Posterior vena cava (tissue), 2 donors: ENCODE measurements at regions of chr16 and their contacts with region 1.

Region 1: GRCh38 chr16:75064403-75065148 is 52.0 kb downstream of the LDHD start:
- DNase-seq: no peak

Region 2: DNA sequence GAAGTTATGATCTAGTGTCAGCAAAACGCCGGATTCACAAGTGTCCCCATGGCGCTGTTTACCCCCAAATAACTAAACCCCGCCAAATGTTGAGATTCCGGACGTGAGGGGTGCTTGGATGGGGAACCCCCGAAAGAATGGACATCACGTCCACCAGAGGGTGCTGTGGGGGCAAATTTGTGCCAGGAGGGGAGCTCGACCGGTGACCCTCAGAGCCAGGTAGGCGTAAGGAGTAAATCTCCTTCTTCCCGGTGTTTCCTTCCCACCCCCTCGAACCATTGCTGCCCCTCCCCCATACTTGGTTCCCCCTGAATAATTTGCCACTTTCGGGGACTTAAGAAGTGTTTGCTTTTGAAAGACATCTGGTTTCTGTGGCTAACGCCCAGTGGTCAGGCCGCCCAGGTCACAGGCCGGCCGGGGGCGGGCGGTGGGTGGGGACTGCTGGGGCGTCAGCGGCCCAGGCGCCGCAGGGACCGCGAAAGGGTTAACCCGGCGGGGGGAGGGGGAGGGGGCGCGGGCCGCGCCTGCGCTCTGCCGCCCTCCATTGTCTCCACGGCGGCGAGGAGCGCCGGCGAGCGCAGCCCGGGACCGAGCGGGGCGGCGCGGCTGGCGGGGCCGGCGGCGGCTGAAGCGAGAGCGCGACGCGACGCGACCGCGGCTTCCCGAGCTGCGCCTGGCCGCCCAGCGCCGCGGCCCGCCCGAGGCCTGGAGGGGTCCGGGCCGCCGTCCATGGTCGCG is 65.9 kb before region 1 on chr16 and contains the start of gene ZNRF1:
- intact Hi-C with region 1: loop called in 1 of 2 experiments (anchors 10 kb)
- DNase-seq: peak; percentile 94
- total RNA-seq, gene ZNRF1: 15.4 to 23.5 TPM

Region 3: GRCh38 chr16:75130150-75130771 is 65.7 kb after region 1 on chr16:
- intact Hi-C with region 1: no loop called
- DNase-seq: no peak